Activated CD8-positive, alpha-beta T cell treated with anti-CD3 and anti-CD28 coated beads for 36 hours (primary cell): ENCODE measurements at regions of chr10 and their contacts with region 1.

Region 1: GRCh38 chr10:69716711-69717560 is 84.8 kb upstream of the COL13A1 start:
- DNase-seq: peak; percentile 80
- ATAC-seq: peak; percentile 70
- H3K4me3 Mint-ChIP-seq: no peak overlapping the region
- H3K27ac Mint-ChIP-seq: no peak overlapping the region
- H3K4me1 Mint-ChIP-seq: no peaks in the 10 kb centered on the region
- H3K27me3 Mint-ChIP-seq: no peaks in the 10 kb centered on the region
- CTCF ChIP-seq: peak; percentile 77

Region 2: GRCh38 chr10:69639291-69640195 is 77.4 kb before region 1 on chr10:
- CTCF ChIA-PET with region 1: interaction called, 94 read pairs
- POLR2A ChIA-PET with region 1: no interaction called
- intact Hi-C with region 1: loop called (anchors 2 kb)
- DNase-seq: peak; percentile 80
- ATAC-seq: peak; percentile 75
- H3K4me3 Mint-ChIP-seq: no peak overlapping the region
- H3K27ac Mint-ChIP-seq: no peak overlapping the region
- H3K4me1 Mint-ChIP-seq: no peaks in the 10 kb centered on the region
- H3K27me3 Mint-ChIP-seq: no peaks in the 10 kb centered on the region
- CTCF ChIP-seq: peak; percentile 88

Region 3: GRCh38 chr10:69644658-69645295 is 72.2 kb before region 1 on chr10:
- CTCF ChIA-PET with region 1: interaction called, 94 read pairs
- POLR2A ChIA-PET with region 1: no interaction called
- intact Hi-C with region 1: loop called (anchors 2 kb)
- DNase-seq: peak; percentile 68
- ATAC-seq: no peak
- H3K4me3 Mint-ChIP-seq: no peak overlapping the region
- H3K27ac Mint-ChIP-seq: no peak overlapping the region
- H3K4me1 Mint-ChIP-seq: no peaks in the 10 kb centered on the region
- H3K27me3 Mint-ChIP-seq: no peaks in the 10 kb centered on the region
- CTCF ChIP-seq: peak; percentile 82

Region 4: GRCh38 chr10:69696073-69696731 is 20.7 kb before region 1 on chr10:
- CTCF ChIA-PET with region 1: interaction called, 19 read pairs
- POLR2A ChIA-PET with region 1: no interaction called
- intact Hi-C with region 1: no loop called
- DNase-seq: peak; percentile 45
- ATAC-seq: peak; percentile 58
- H3K4me3 Mint-ChIP-seq: no peak overlapping the region
- H3K27ac Mint-ChIP-seq: no peak overlapping the region
- H3K4me1 Mint-ChIP-seq: no peaks in the 10 kb centered on the region
- H3K27me3 Mint-ChIP-seq: peaks cover 18% of the 10 kb centered on the region
- CTCF ChIP-seq: peak; percentile 33

Region 5: GRCh38 chr10:69728335-69728870 is 11.5 kb after region 1 on chr10:
- CTCF ChIA-PET with region 1: interaction called, 28 read pairs
- POLR2A ChIA-PET with region 1: no interaction called
- intact Hi-C with region 1: no loop called
- DNase-seq: no peak
- ATAC-seq: peak; percentile 79
- H3K4me3 Mint-ChIP-seq: no peak overlapping the region
- H3K27ac Mint-ChIP-seq: no peak overlapping the region
- H3K4me1 Mint-ChIP-seq: peaks cover 3% of the 10 kb centered on the region
- H3K27me3 Mint-ChIP-seq: peaks cover 9% of the 10 kb centered on the region
- CTCF ChIP-seq: no peak

Region 6: DNA sequence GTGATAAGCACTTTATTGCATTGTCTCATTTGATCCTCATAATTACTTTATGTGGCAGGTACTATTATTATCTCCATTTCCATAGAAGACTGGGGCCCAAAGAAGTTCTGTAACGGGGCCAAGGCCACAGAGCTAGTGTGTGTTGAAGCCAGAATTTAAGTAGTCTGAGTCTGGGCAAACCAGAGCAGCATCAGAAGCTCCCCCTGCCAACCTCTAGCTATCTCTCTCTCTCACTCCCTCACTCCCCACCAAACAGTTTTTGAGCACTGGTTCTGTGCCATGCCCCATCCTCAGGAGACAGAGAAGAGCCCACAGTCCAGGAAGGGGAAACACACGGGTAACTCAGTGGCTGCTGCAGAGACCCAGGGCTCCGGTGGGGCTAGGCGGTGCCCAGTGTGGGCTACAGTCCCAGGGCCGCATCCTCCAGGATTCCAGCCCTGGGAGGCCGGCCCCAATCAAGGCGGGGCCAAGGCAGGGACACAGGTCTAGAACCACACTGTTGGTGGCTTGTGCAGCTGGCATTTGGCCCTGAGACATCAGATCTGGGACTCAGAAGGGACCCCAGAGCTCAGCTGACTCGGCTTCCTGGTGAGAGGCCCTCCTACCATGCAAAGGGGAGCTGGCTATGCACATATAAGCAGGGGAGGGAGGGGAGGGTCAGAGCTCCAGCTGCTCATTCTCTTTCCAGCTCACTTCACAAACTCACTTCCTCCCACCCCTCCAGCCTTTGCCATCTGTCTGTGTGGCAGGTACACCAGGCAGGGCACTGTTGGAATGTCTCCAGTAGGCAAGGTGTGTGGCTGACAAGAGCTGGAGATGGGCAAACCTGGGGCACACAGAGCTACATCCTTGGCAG is 119.2 kb after region 1 on chr10:
- CTCF ChIA-PET with region 1: no interaction called
- POLR2A ChIA-PET with region 1: no interaction called
- intact Hi-C with region 1: no loop called
- DNase-seq: no peak
- ATAC-seq: no peak
- H3K4me3 Mint-ChIP-seq: no peak overlapping the region
- H3K27ac Mint-ChIP-seq: no peak overlapping the region
- H3K4me1 Mint-ChIP-seq: no peaks in the 10 kb centered on the region
- H3K27me3 Mint-ChIP-seq: peaks cover 6% of the 10 kb centered on the region
- CTCF ChIP-seq: no peak